Right ventricle myocardium superior (tissue), 1 donor: ENCODE measurements at regions of chr1 and their contacts with region 1.

Region 1: GRCh38 chr1:114979278-114979891 is 50.2 kb upstream of the TSHB start:
- DNase-seq: no peak
- ATAC-seq: peak; percentile 60

Region 2: DNA sequence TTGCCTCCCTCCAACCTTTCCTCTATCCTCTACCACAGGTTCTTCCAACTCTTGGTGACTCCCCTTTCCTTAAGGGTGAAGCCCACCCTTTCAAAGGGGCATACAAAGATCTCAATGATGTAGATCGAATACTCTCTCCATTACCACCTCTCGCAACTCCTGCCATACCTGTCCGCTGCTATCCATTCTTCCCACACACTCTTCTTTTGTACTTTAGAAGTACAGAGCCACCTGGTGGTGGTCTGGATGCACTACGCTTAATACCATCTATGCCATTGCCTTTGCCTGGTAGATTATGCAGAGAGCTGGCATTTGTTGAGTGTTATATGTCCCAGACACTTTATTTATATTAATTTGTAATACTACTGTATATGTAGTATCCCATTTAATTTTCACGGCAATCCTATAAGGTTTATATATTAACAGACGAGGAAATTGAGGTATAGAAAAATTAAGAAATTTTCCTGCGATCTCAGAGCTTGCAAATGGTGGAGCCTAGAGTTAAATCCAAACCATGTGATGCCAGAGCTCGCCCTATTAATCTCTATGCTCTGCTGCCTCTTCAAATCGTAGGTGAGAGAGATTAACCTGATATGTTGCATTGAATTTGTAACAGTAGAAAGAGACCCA is 73.2 kb after region 1 on chr1:
- intact Hi-C with region 1: loop called (anchors 5 kb)
- DNase-seq: peak; percentile 56
- ATAC-seq: peak; percentile 72

Region 3: DNA sequence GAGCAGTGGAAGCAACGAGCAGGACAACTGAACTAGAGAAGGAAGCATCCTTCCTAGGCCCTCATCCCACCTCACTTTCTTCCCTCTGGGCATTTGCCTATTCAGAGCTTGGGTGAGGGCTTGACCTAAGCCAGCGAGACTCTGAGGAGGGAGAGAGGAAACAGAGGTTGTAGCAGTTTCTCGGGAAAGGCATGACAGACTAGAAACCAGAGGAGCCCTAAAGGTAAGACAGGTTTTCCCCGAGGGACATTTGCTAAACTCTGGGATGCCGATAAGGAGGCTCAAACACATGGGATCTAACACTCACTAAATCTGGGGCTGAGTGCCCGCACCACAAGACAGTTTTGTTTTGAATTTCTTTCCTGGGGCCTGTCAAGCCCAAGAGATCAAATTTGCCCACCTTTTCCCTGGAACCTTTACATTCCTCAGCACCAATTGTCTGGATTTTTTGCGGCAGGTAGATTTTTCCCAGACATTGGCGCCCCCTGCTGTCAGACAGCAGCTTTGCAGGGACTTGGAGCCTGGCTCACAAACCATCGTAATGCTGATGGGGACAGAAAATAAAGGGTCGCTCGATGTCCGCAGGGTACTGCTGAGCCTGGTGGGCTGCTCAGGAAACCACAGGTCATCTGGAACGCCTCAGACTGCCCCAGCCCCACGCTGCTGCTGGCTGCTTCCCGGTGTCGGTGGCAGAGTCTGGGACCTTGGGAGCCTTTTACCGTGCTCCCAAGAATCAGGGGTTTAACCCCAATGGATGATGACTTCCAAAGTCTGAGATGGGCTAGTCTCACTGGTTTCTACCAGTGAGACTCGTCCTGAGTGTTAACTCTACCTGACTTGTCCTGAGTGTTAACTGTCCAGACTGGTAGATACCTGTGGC is 133.4 kb after region 1 on chr1:
- intact Hi-C with region 1: loop called (anchors 2 kb)
- DNase-seq: peak; percentile 53
- ATAC-seq: peak; percentile 36

Region 4: GRCh38 chr1:115595279-115596079 is 616.1 kb after region 1 on chr1:
- intact Hi-C with region 1: loop called (anchors 10 kb)
- DNase-seq: peak; percentile 93
- ATAC-seq: peak; percentile 92